HepG2 (cell line): ENCODE measurements at regions of chr19 and their contacts with region 1.

Region 1: GRCh38 chr19:49646486-49646985 is 4.5 kb downstream of the SCAF1 start:
- DNase-seq: no peak
- ATAC-seq: no peak
- H3K4me3 ChIP-seq: no peak overlapping the region
- H3K27ac ChIP-seq: no peak overlapping the region
- H3K4me1 ChIP-seq: peaks cover 40% of the 10 kb centered on the region
- H3K27me3 ChIP-seq: no peaks in the 10 kb centered on the region
- CTCF ChIP-seq: no peak
- EP300 ChIP-seq: no peak
- POLR2A ChIP-seq: no peak
- RAD21 ChIP-seq: no peak

Region 2: GRCh38 chr19:49665351-49666119 is 19.0 kb after region 1 on chr19 and contains the starts of genes BCL2L12 and IRF3:
- CTCF ChIA-PET with region 1: no interaction called
- POLR2A ChIA-PET with region 1: interaction called, 92 read pairs
- in situ Hi-C with region 1: no loop called
- intact Hi-C with region 1: loop called (anchors 2 kb)
- DNase-seq: peak; percentile 92
- ATAC-seq: peak; percentile 81
- H3K4me3 ChIP-seq: peak within 1 kb of the TSS; percentile 63 to 96 (median 93)
- H3K27ac ChIP-seq: peak within 1 kb of the TSS; percentile 74
- H3K4me1 ChIP-seq: peaks cover 27% of the 10 kb centered on the region
- H3K27me3 ChIP-seq: no peaks in the 10 kb centered on the region; a peak in 1 of 5 replicates
- CTCF ChIP-seq: peak; percentile 33; the same call in 1 of the 2 replicates
- EP300 ChIP-seq: no peak
- POLR2A ChIP-seq: peak; percentile 32 to 69; a peak in 2 of 4 replicates
- RAD21 ChIP-seq: no peak
- total RNA-seq, gene BCL2L12: 32.6 and 40.8 TPM in 2 replicates
- total RNA-seq, gene IRF3: 61.0 and 65.5 TPM in 2 replicates

Region 3: GRCh38 chr19:49701271-49701786 is 54.8 kb after region 1 on chr19:
- CTCF ChIA-PET with region 1: no interaction called
- POLR2A ChIA-PET with region 1: no interaction called
- in situ Hi-C with region 1: no loop called
- intact Hi-C with region 1: no loop called
- DNase-seq: no peak
- ATAC-seq: peak; percentile 74
- H3K4me3 ChIP-seq: peak overlapping the region in 1 of 3 experiments; percentile 54; a peak in 1 of 6 replicates
- H3K27ac ChIP-seq: no peak overlapping the region
- H3K4me1 ChIP-seq: peaks cover 19% of the 10 kb centered on the region
- H3K27me3 ChIP-seq: peaks cover 0 to 20% of the 10 kb centered on the region in 2 experiments; a peak in 3 of 5 replicates
- CTCF ChIP-seq: peak; percentile 33
- EP300 ChIP-seq: no peak
- POLR2A ChIP-seq: no peak
- RAD21 ChIP-seq: no peak